ENCODE measurements at regions of chr12 and their contacts with region 1.

Region 1: DNA sequence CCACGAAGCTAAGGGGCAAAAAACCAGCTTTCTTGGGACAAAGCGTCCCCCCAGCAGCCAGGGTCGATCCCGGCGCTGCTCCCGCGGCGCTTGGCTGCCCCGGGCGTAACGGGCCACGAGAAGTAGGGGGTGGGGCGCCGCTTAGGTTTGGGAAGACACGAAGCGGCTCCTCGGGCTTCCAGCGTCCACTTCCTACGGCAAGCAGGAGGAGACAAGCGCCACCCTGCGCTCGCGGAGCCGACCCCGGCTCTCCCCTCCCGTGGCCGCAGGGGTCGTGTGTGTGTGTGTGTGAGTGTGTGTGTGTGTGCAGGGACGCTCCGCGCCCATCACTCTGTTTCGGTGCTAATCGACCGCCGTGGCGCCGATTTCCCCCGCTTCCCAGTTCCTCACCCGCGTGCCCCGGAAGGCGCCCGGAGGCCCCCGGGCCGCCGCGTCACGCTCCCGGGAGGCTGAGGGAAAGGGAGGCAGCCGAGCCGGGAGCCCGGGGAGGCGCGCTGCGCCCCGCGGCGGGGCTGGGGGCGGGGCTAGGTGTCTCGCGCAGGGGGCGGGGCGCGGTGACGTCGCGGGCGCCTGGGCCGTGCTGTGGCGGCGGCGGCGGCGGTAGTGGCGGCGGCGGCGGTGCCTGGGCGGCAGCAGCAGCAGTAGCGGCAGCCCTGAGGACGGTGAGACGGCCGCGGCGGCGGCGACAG is at the start of gene ERC1:
- DNase-seq: peak; percentile 72
- ATAC-seq: peak; percentile 85
- H3K4me3 ChIP-seq: peak within 1 kb of the TSS; percentile 62 to 83 (median 81)
- H3K27ac ChIP-seq: peak within 1 kb of the TSS; percentile 93
- H3K4me1 ChIP-seq: peaks cover 40% of the 10 kb centered on the region
- H3K27me3 ChIP-seq: no peaks in the 10 kb centered on the region; a peak in 1 of 5 replicates
- CTCF ChIP-seq: peak; percentile 54
- EP300 ChIP-seq: peak in 1 of 2 experiments; percentile 13; a peak in 1 of 4 replicates
- POLR2A ChIP-seq: peak; percentile 80 to 85
- RAD21 ChIP-seq: peak; percentile 40; the same call in 1 of the 2 replicates
- total RNA-seq, gene ERC1: 12.4 and 15.7 TPM in 2 replicates

Region 2: GRCh38 chr12:949453-950191 is 41.2 kb before region 1 on chr12 and contains the start of gene RAD52:
- CTCF ChIA-PET with region 1: no interaction called
- POLR2A ChIA-PET with region 1: interaction called, 20 read pairs
- in situ Hi-C with region 1: no loop called
- intact Hi-C with region 1: no loop called
- DNase-seq: peak; percentile 96
- ATAC-seq: peak; percentile 92
- H3K4me3 ChIP-seq: peak within 1 kb of the TSS; percentile 78 to 85 (median 78)
- H3K27ac ChIP-seq: peak within 1 kb of the TSS; percentile 82
- H3K4me1 ChIP-seq: peaks cover 52% of the 10 kb centered on the region
- H3K27me3 ChIP-seq: no peaks in the 10 kb centered on the region; a peak in 1 of 5 replicates
- CTCF ChIP-seq: peak; percentile 99
- EP300 ChIP-seq: peak in 1 of 2 experiments; percentile 45; a peak in 2 of 4 replicates
- POLR2A ChIP-seq: peak; percentile 65 to 91; a peak in 3 of 4 replicates
- RAD21 ChIP-seq: peak; percentile 94
- total RNA-seq, gene RAD52: 13.5 and 19.9 TPM in 2 replicates

Region 3: DNA sequence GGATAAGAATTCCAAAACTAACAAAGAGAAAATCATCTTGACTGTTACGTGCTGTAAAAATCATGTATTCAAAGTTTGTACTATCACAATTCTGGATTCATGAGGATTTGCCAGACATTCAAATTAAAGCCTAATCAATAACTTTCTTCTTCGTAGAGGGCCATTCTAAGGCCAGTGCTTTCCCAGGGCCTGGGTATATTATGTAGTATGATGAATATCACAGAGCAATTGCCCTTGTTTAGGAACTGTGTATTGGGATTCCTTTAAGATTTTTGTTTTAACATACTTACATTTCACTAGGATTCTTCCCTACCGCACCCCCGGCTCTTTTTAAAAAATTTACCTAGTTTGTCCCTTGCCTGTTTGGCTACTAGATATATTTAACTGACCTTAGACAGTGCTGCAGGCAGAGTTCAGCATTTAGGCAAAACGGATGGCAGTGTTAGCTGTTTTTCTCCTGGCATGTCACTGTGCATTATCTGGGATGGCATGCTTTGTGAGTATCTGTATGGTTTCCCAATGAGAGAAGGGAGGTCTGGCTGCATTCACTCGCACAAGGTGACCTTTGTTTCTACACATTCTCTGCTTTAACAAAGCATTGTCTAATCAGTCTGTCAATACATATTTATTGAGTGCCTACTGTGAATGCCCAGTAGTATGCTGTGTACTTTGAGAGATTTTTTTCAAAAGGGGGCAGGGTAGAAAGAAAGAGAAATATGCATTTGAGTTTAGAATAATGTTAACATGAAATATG is 63.5 kb after region 1 on chr12:
- CTCF ChIA-PET with region 1: no interaction called
- POLR2A ChIA-PET with region 1: no interaction called
- in situ Hi-C with region 1: no loop called
- intact Hi-C with region 1: loop called (anchors 5 kb)
- DNase-seq: peak; percentile 94
- ATAC-seq: peak; percentile 99
- H3K4me3 ChIP-seq: peak overlapping the region in 1 of 3 experiments; percentile 12; a peak in 1 of 6 replicates
- H3K27ac ChIP-seq: peak overlapping the region; percentile 59
- H3K4me1 ChIP-seq: peaks cover 38% of the 10 kb centered on the region
- H3K27me3 ChIP-seq: no peaks in the 10 kb centered on the region
- CTCF ChIP-seq: no peak
- EP300 ChIP-seq: peak in 1 of 2 experiments; percentile 40; a peak in 1 of 4 replicates
- POLR2A ChIP-seq: no peak
- RAD21 ChIP-seq: no peak

Measured in HepG2 (cell line).